Tibial artery (tissue), 4 donors: ENCODE measurements at regions of chr16 and their contacts with region 1.

Region 1: DNA sequence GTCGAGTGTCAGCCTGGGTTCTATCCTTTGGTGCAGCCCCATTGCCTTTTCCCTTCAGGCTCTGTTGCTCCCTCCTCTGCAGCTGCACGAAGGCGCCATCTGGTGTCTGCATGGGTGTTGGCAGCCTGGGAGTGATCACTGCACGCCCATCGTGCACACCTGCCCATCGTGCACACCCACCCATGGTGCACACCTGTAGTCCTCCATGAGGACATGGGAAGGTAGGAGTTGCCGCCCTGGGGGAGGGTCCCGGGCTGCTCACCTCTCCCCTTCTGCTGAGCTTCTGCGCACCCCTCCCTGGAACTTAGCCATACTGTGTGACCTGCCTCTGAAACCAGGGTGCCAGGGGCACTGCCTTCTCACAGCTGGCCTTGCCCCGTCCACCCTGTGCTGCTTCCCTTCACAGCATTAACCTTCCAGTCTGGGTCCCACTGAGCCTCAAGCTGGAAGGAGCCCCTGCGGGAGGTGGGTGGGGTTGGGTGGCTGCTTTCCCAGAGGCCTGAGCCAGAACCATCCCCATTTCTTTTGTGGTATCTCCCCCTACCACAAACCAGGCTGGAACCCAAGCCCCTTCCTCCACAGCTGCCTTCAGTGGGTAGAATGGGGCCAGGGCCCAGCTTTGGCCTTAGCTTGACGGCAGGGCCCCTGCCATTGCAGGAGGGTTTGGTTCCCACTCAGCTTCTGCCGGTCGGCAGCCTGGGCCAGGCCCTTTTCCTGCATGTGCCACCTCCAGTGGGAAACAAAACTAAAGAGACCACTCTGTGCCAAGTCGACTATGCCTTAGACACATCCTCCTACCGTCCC is 2.9 kb downstream of the CTRL start:
- DNase-seq: peak in 1 of 2 donors; percentile 69
- H3K4me3 ChIP-seq: no peak overlapping the region
- H3K27ac ChIP-seq: no peak overlapping the region
- H3K4me1 ChIP-seq: peaks cover 0 to 29% (median 23%) of the 10 kb centered on the region in 4 donors
- H3K27me3 ChIP-seq: no peaks in the 10 kb centered on the region
- CTCF ChIP-seq: peak; percentile 88 to 95

Region 2: GRCh38 chr16:67672739-67673662 is 255.8 kb before region 1 on chr16:
- intact Hi-C with region 1: loop called (anchors 10 kb)
- DNase-seq: peak in 1 of 2 donors; percentile 58
- H3K4me3 ChIP-seq: no peak overlapping the region
- H3K27ac ChIP-seq: peak overlapping the region in 1 of 2 donors; percentile 32
- H3K4me1 ChIP-seq: peaks cover 0 to 38% (median 6%) of the 10 kb centered on the region in 4 donors
- H3K27me3 ChIP-seq: no peaks in the 10 kb centered on the region
- CTCF ChIP-seq: peak; percentile 52 to 54

Region 3: DNA sequence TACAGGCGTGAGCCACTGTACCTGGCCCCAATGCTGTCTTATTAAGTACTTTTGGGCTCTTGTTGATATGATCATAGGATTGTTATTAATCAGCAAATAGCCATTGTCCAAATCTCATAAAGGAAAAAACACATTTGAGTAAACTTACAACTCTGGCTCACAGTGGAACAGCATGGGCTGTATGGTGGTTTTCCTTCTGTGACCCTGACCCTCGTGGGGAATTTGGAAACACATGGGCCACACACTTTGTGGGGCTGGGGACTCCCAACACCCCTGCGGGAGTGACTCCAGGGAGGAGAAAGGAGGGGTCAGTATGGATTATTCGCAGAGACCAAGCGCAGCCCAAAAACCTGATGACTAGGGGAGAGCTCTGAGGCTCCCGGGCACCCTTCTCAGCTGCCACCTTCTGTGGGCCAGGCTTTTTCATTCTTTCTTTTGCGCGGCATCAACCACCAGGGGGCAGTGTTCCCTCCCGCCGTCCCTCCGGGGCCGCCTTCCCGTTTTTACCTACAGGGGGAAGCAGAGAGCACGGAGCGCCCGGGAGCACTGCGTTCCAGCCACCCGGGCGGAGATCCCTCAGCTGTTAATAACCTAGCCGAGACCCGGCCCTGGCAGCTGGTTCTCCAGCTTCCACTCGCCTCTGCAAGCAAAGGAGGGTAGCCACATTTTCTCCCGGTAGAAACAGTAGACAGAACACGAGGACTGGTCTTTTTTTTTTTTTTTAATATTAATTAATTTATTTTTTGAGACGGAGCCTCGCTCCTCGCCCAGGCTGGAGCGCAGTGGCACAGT is 112.3 kb before region 1 on chr16:
- intact Hi-C with region 1: loop called (anchors 5 kb)
- DNase-seq: peak; percentile 71 to 89
- H3K4me3 ChIP-seq: no peak overlapping the region
- H3K27ac ChIP-seq: peak overlapping the region in 1 of 2 donors; percentile 38
- H3K4me1 ChIP-seq: peaks cover 0 to 6% (median 2%) of the 10 kb centered on the region in 4 donors
- H3K27me3 ChIP-seq: no peaks in the 10 kb centered on the region
- CTCF ChIP-seq: peak; percentile 100

Region 4: DNA sequence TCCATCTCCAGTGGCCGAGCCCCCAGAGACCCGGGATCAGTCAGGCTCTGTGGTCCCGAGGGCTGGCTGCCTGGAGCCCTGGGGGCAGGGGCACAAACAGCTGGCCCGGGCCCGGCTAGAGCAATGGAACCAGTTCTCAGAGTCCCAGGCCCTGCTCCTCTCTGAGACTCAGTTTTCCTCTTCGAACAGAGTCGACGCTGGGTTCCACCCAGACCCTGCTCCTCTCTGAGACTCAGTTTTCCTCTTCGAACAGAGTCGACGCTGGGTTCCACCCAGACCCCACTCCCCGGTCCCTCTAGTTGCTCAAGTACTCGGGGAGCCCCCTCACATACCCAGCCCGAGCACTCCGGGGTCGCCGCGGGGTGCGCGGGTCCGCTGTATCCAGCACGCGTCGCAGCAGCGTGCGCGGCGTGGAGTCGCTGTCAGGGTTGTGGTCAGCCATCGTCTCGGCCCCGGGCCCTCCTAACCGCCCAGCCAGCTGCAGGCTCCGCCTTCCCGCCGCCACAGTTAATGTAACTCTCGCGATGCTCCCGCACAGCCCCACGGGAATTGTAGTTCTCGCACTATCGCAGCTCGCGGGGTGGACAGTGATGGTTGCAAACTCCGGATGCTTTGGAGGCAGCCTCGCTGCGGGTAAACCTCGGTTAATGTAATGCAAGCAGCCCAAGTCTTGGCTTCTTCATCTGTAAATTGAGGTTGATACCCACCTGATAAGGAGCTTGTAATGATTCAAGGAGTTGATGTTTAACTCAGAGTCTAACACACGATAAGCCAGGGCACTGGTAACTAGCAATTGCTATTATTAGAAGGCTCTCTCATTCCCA is 95.1 kb before region 1 on chr16:
- intact Hi-C with region 1: loop called (anchors 5 kb)
- DNase-seq: peak; percentile 95 to 97
- H3K4me3 ChIP-seq: peak overlapping the region; percentile 76 to 82
- H3K27ac ChIP-seq: peak overlapping the region; percentile 78 to 88
- H3K4me1 ChIP-seq: peaks cover 0 to 19% (median 16%) of the 10 kb centered on the region in 4 donors
- H3K27me3 ChIP-seq: no peaks in the 10 kb centered on the region
- CTCF ChIP-seq: no peak

Region 5: GRCh38 chr16:67883872-67884261 is 44.9 kb before region 1 on chr16:
- intact Hi-C with region 1: loop called (anchors 2 kb)
- DNase-seq: peak; percentile 47 to 76
- H3K4me3 ChIP-seq: no peak overlapping the region
- H3K27ac ChIP-seq: peak overlapping the region; percentile 66
- H3K4me1 ChIP-seq: peaks cover 0 to 23% (median 11%) of the 10 kb centered on the region in 4 donors
- H3K27me3 ChIP-seq: no peaks in the 10 kb centered on the region
- CTCF ChIP-seq: peak; percentile 89 to 92

Region 6: DNA sequence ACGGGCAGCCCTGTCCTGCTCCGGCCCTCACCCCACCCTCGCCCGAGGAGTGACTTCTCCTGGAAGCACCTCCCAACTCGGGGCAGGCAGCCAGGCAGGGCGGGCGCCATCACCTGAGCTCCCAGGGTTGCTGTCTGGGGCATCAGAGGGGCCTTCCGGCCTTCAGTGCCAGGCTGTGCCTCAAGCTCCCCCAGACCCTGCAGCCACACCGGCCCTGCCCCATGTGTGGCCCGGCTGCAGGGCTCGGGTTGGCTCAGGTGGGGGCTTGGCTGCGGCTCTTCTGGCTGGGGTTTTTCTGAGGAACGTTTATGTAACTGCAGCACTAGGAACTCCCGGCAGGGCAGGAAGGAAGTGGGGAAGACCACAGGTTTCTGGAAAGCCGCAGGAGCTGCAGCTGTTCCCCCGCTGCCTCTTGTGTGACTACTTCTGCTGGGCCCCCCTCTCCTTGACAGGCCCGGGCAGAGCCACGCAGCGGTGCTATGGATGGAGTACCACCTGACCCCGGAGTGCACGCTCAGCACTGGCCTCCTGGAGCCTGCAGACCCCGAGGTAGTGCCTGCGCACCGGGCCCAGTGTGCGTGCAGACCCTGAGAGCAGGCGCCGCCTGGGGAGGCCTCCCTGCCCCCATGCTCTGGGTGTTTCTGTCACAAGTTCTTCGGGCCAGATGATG is 427.6 kb after region 1 on chr16:
- intact Hi-C with region 1: no loop called
- DNase-seq: no peak
- H3K4me3 ChIP-seq: no peak overlapping the region
- H3K27ac ChIP-seq: no peak overlapping the region
- H3K4me1 ChIP-seq: no peaks in the 10 kb centered on the region
- H3K27me3 ChIP-seq: no peaks in the 10 kb centered on the region
- CTCF ChIP-seq: no peak